HCT116 (cell line): ENCODE measurements at regions of chr10 and their contacts with region 1.

Region 1: GRCh38 chr10:95246579-95247051 is 44.2 kb downstream of the PDLIM1 start:
- DNase-seq: peak; percentile 65
- ATAC-seq: peak; percentile 79
- H3K4me3 ChIP-seq: no peak overlapping the region
- H3K27ac ChIP-seq: no peak overlapping the region
- H3K4me1 ChIP-seq: peaks cover 0 to 15% of the 10 kb centered on the region in 2 experiments; a peak in 1 of 4 replicates
- H3K27me3 ChIP-seq: no peaks in the 10 kb centered on the region
- CTCF ChIP-seq: peak; percentile 78 to 84 (median 82)
- POLR2A ChIP-seq: no peak
- RAD21 ChIP-seq: peak; percentile 88

Region 2: DNA sequence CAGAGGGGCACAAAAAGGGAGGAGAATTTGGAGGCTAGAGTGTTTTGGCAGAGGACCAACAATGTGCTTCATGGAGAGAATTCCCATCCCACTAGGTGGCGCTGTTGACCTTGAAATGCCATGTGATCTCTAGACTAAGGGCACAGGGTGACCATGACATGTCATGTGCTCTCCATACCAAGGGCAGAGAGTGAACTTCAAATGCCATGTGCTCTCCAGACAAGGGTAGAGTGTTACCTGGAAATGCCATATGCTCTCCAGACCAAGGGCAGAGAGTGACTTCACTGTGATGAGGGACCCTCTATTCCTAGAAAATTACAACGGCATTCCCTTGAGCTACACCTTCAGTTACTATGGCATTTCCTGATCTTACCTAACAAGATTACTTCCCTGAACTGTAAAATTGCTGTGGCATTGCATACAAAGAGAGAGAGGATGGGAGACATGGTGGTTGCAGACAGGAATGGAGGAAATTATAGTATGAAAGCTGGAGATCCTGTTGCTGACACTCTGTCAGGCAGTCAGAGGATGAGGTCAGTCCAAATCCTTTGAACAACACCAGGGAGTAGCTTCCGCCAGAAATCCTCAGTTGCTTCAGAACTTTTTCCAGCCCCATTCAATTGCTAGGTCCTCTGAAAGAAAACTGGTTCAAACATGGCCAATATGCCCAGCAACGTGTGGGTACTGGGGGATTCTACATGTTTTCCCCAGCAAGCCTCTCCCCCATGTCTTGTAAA is 113.4 kb before region 1 on chr10:
- CTCF ChIA-PET with region 1: interaction called, 24 read pairs
- POLR2A ChIA-PET with region 1: no interaction called
- RAD21 ChIA-PET with region 1: interaction called in 1 of 2 experiments, 3 read pairs
- intact Hi-C with region 1: loop called (anchors 1 kb)
- DNase-seq: peak; percentile 82
- ATAC-seq: peak; percentile 96
- H3K4me3 ChIP-seq: no peak overlapping the region
- H3K27ac ChIP-seq: no peak overlapping the region
- H3K4me1 ChIP-seq: no peaks in the 10 kb centered on the region
- H3K27me3 ChIP-seq: no peaks in the 10 kb centered on the region
- CTCF ChIP-seq: peak; percentile 68 to 88 (median 77)
- POLR2A ChIP-seq: no peak
- RAD21 ChIP-seq: peak; percentile 87

Region 3: GRCh38 chr10:95201736-95202135 is 44.9 kb before region 1 on chr10:
- CTCF ChIA-PET with region 1: interaction called, 42 read pairs
- POLR2A ChIA-PET with region 1: no interaction called
- RAD21 ChIA-PET with region 1: interaction called, 8 to 9 read pairs
- intact Hi-C with region 1: loop called (anchors 1 kb)
- DNase-seq: peak; percentile 46
- ATAC-seq: peak; percentile 100
- H3K4me3 ChIP-seq: no peak overlapping the region
- H3K27ac ChIP-seq: no peak overlapping the region
- H3K4me1 ChIP-seq: peaks cover 0 to 2% of the 10 kb centered on the region in 2 experiments; a peak in 1 of 4 replicates
- H3K27me3 ChIP-seq: no peaks in the 10 kb centered on the region
- CTCF ChIP-seq: peak; percentile 73 to 84 (median 74)
- POLR2A ChIP-seq: no peak
- RAD21 ChIP-seq: peak; percentile 86

Region 4: DNA sequence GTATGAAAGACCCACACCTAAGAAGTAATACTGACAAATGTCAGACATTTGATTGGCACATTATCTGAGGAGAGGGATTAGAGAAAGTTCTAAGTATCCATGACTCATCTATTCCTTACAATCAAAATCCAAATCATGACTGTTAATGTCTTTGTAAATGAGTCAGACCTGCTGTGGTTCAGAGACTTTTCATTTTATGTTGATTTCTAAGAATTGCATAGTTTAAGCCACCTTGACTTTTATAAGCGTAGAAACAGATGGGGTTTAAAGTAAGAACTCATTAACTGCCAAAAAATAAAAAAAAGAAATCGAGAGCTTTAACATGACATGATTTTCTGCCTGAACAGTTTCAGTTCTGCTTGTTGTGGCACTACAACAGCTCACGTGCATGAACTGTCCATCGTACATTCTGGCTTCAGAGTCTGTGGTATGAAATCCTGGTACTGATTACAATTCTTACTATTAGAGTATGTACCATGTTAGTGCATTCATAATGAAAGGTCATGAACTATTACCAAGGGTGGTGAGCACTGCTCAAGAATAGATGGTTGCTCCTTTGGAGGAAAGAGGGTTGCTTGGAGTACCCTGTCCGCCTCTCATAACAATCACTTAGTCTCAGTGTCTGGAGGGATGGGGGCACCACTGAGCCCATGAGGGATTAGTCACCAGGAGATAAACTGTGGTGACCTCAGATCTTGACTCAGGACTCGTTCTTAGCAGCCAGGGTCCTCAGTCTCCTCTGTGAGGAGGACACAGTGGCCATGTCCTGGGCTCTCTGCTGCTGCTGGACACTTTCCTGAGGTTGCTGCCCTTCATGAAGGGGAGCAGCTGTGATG is 10.3 kb before region 1 on chr10:
- CTCF ChIA-PET with region 1: interaction called, 14 read pairs
- POLR2A ChIA-PET with region 1: no interaction called
- RAD21 ChIA-PET with region 1: no interaction called
- intact Hi-C with region 1: no loop called
- DNase-seq: peak; percentile 68
- ATAC-seq: peak; percentile 73
- H3K4me3 ChIP-seq: peak overlapping the region in 1 of 2 experiments; percentile 20; a peak in 2 of 4 replicates
- H3K27ac ChIP-seq: peak overlapping the region; percentile 68; the same call in 1 of the 2 replicates
- H3K4me1 ChIP-seq: peaks cover 30 to 38% of the 10 kb centered on the region in 2 experiments
- H3K27me3 ChIP-seq: no peaks in the 10 kb centered on the region
- CTCF ChIP-seq: no peak
- POLR2A ChIP-seq: no peak
- RAD21 ChIP-seq: no peak

Region 5: DNA sequence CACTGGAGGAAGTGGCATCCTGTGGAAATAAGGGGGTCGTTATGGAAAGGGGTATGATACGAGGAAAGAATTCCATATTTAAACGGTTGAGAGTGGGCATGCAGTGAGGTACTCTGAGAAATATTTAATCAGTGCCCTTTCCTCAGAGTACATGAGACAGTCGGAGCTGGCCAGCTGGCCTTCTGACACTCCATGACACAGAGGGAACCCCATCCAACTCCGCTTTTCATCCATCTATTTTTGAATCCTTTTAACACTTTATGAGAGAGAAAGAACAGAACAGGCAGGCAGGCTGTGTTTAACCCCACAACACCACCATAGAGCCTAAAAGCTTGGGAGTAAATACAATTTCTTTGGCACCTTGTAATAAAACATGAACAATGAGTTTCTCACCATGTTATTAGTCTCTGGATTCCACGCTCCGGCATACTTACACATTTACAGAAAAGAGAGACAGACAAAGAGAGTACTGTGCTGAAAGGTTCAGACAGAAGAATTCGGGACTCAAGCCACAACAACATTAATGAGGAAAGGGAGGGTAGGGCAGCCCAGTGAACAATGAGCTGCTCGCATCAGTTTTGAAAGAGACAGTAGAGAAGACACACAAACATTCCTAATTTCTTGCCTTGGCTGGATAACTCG is 168.3 kb after region 1 on chr10:
- CTCF ChIA-PET with region 1: no interaction called
- POLR2A ChIA-PET with region 1: no interaction called
- RAD21 ChIA-PET with region 1: no interaction called
- intact Hi-C with region 1: no loop called
- DNase-seq: no peak
- ATAC-seq: no peak
- H3K4me3 ChIP-seq: no peak overlapping the region
- H3K27ac ChIP-seq: no peak overlapping the region
- H3K4me1 ChIP-seq: no peaks in the 10 kb centered on the region
- H3K27me3 ChIP-seq: no peaks in the 10 kb centered on the region
- CTCF ChIP-seq: no peak
- POLR2A ChIP-seq: no peak
- RAD21 ChIP-seq: no peak

Region 6: GRCh38 chr10:95601116-95601719 is 354.6 kb after region 1 on chr10:
- CTCF ChIA-PET with region 1: interaction called, 3 read pairs
- POLR2A ChIA-PET with region 1: no interaction called
- RAD21 ChIA-PET with region 1: no interaction called
- intact Hi-C with region 1: loop called (anchors 2 kb)
- DNase-seq: peak; percentile 90
- ATAC-seq: peak; percentile 97
- H3K4me3 ChIP-seq: no peak overlapping the region
- H3K27ac ChIP-seq: no peak overlapping the region
- H3K4me1 ChIP-seq: no peaks in the 10 kb centered on the region
- H3K27me3 ChIP-seq: no peaks in the 10 kb centered on the region
- CTCF ChIP-seq: peak; percentile 96 to 99 (median 98)
- POLR2A ChIP-seq: no peak
- RAD21 ChIP-seq: peak; percentile 99